Activated CD4-positive, alpha-beta T cell treated with anti-CD3 and anti-CD28 coated beads for 36 hours (primary cell): ENCODE measurements at regions of chr15 and their contacts with region 1.

Region 1: GRCh38 chr15:100602064-100602822 is at the starts of genes ASB7 and LINS1:
- DNase-seq: peak; percentile 100
- ATAC-seq: peak; percentile 85
- H3K4me3 Mint-ChIP-seq: no peak within 1 kb of the TSS
- H3K27ac Mint-ChIP-seq: no peak within 1 kb of the TSS
- H3K4me1 Mint-ChIP-seq: peaks cover 58% of the 10 kb centered on the region
- H3K27me3 Mint-ChIP-seq: no peaks in the 10 kb centered on the region
- total RNA-seq, gene ASB7: 16.6 to 19.5 TPM
- total RNA-seq, gene LINS1: 41.7 to 43.8 TPM

Region 2: GRCh38 chr15:99250494-99251435 is 1351.5 kb before region 1 on chr15:
- CTCF ChIA-PET with region 1: no interaction called
- POLR2A ChIA-PET with region 1: no interaction called
- intact Hi-C with region 1: loop called (anchors 5 kb)
- DNase-seq: peak; percentile 98
- ATAC-seq: peak; percentile 99
- H3K4me3 Mint-ChIP-seq: no peak overlapping the region
- H3K27ac Mint-ChIP-seq: peak overlapping the region; percentile 95
- H3K4me1 Mint-ChIP-seq: peaks cover 22% of the 10 kb centered on the region
- H3K27me3 Mint-ChIP-seq: no peaks in the 10 kb centered on the region

Region 3: DNA sequence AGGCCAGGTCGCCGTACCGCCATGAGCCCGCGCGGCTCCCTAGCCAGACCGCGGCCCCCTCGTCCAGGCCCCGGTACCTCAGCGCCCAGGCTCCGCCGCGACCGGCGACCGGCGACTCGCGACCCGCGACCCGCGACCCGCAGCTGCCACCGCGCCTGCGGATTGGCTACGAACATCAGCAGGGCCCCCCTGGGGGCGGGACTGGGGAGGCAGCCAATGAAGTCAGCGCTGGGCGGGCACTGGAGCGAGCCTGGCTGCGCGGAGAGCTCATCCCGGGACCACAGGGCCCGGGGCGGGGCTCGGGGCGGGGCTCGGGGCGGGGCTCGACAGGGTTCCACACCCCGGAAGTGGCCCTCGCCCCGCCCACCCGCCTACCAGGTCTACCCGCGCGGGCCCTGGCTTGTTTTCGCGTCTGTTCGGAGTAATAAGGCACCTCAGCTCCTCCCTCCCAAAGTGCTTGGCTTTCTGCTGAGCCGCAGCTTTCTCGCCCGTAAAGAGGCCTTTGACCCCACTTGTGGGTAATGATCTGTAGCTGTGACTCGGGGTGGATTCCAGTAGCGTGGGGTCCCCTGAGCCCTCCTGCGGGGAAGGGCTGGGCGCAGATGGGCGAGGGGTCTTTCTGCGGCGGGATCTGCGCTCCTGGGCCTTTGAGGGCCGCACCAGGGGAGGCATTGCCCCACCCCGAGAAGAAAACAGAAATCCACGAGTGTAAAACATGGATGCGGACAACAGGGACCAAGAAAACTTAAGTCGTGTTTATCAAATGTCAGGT is 868.8 kb before region 1 on chr15 and contains the start of gene LYSMD4:
- CTCF ChIA-PET with region 1: no interaction called
- POLR2A ChIA-PET with region 1: no interaction called
- intact Hi-C with region 1: loop called (anchors 2 to 10 kb)
- DNase-seq: peak; percentile 100
- ATAC-seq: peak; percentile 99
- H3K4me3 Mint-ChIP-seq: peak within 1 kb of the TSS; percentile 71
- H3K27ac Mint-ChIP-seq: peak within 1 kb of the TSS; percentile 91
- H3K4me1 Mint-ChIP-seq: peaks cover 23% of the 10 kb centered on the region
- H3K27me3 Mint-ChIP-seq: no peaks in the 10 kb centered on the region
- total RNA-seq, gene LYSMD4: 4.7 to 5.3 TPM

Region 4: GRCh38 chr15:100349696-100350433 is 252.4 kb before region 1 on chr15:
- CTCF ChIA-PET with region 1: interaction called, 14 read pairs
- POLR2A ChIA-PET with region 1: interaction called, 4 read pairs
- intact Hi-C with region 1: loop called (anchors 1 to 2 kb)
- DNase-seq: peak; percentile 93
- ATAC-seq: peak; percentile 95
- H3K4me3 Mint-ChIP-seq: peak overlapping the region; percentile 78
- H3K27ac Mint-ChIP-seq: peak overlapping the region; percentile 77
- H3K4me1 Mint-ChIP-seq: peaks cover 7% of the 10 kb centered on the region
- H3K27me3 Mint-ChIP-seq: peaks cover 7% of the 10 kb centered on the region

Region 5: DNA sequence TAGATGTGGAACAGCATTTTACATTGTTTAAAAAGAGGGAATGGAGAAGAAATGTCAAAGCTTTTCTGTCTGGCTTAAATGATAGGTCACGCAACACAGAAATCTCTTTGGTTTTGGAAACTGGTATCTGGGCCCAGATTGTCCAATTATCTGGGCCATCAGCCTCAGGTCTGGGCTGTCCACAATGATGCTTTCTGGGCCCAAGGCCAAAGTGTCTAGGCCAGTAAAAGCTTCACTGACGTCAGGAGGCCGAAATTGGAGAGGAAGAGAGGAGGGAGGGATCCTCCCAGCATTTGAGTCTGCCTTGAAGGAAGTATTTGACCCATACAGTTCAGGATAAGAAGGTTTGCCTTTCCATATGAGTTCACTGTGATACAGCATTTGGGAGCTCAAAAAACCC is 216.7 kb after region 1 on chr15:
- CTCF ChIA-PET with region 1: no interaction called
- POLR2A ChIA-PET with region 1: no interaction called
- intact Hi-C with region 1: no loop called
- DNase-seq: no peak
- ATAC-seq: no peak
- H3K4me3 Mint-ChIP-seq: no peak overlapping the region
- H3K27ac Mint-ChIP-seq: no peak overlapping the region
- H3K4me1 Mint-ChIP-seq: peaks cover 3% of the 10 kb centered on the region
- H3K27me3 Mint-ChIP-seq: peaks cover 25% of the 10 kb centered on the region

Region 6: GRCh38 chr15:101251830-101252820 is 649.9 kb after region 1 on chr15 and contains the start of gene CHSY1:
- CTCF ChIA-PET with region 1: no interaction called
- POLR2A ChIA-PET with region 1: no interaction called
- intact Hi-C with region 1: loop called in 1 of 2 experiments (anchors 1 kb)
- DNase-seq: peak; percentile 91
- ATAC-seq: peak; percentile 61
- H3K4me3 Mint-ChIP-seq: peak within 1 kb of the TSS; percentile 85
- H3K27ac Mint-ChIP-seq: peak within 1 kb of the TSS; percentile 87
- H3K4me1 Mint-ChIP-seq: peaks cover 58% of the 10 kb centered on the region
- H3K27me3 Mint-ChIP-seq: no peaks in the 10 kb centered on the region
- total RNA-seq, gene CHSY1: 31.5 to 36.1 TPM

Region 7: DNA sequence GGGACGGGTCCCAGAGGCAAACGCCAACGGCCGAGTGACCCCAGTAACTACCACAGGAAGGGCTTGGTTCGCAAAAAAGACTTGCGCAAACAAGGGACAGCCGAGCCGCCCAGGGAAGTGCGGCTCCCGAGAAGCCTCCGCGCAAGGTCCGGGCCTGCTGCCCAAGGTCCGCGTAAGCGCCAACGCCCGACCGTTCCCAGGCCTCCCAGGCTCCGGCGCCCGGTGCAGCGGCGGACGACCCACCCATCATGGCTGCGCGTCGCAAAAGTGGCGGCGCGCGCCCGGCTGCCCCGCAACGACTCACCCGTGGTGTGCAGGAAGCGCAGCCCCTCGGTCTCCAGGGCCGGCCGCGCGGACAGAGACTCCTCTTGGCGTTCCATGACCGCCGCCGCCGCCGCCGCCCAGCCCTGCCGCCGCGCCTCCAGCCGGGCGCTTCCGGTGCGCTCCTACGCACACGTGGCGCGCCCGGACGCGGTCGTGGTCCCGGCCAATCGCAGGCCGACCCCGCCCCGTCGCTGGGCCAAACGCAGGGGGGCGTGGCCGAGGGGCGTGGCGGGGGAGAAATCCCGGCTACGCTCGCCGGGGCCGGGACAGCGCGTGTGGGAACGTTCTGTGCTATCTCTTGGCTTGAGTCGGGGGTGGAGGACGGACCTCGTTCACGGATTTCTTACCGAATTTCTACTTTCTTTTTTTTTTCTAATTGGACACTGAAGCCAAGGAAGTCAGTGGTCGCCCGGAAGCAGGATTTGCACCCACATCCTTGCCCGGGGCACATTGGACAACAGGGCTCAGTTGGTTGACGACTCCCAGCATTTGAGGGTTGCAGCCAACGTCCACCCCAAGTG is 675.0 kb after region 1 on chr15 and contains the start of gene SELENOS:
- CTCF ChIA-PET with region 1: interaction called, 5 read pairs
- POLR2A ChIA-PET with region 1: no interaction called
- intact Hi-C with region 1: loop called in 1 of 2 experiments (anchors 1 kb)
- DNase-seq: peak; percentile 93
- ATAC-seq: peak; percentile 92
- H3K4me3 Mint-ChIP-seq: peak within 1 kb of the TSS; percentile 89
- H3K27ac Mint-ChIP-seq: peak within 1 kb of the TSS; percentile 79
- H3K4me1 Mint-ChIP-seq: peaks cover 24% of the 10 kb centered on the region
- H3K27me3 Mint-ChIP-seq: no peaks in the 10 kb centered on the region
- total RNA-seq, gene SELENOS: 14.5 to 20.8 TPM

Region 8: DNA sequence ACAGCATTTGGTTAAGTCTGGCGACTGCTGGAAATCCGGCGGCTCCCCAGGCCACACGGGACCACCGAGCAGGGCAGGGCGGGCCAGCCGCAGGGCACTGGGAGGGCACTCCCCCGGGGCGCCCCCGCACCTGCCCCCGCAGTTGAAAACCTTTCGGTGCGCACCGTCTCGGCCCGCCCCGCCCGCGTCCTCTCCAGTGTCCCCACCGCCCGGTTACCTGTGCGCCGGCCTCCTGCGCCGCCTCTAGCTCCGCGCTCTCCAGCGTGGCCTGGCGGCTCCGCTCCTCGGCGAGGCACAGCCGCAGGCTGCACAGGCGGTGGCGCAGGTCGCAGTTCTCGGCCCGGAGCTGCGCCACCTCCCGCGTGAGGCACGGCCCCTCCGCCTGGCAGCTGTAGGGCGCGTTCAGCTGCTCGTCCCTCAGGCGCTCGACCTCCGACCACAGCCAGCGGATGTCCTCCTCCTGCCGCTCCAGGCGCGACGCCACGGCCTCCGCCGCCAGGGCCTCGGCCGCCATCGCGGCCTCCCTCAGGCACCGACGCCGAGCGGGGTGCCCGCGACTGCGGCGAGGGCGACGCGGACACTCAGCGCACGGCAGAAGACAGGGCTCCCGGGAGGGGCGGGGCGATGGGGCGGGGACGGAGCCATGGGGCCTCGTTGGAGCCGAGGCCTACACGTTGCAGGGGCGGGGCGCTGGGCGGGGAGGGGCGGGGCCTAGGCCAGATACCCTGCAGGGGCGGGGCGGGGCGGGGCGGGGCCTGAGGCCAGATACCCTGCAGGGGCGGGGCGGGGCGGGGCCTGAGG is 1121.8 kb after region 1 on chr15 and contains the start of gene TARS3:
- CTCF ChIA-PET with region 1: no interaction called
- POLR2A ChIA-PET with region 1: no interaction called
- intact Hi-C with region 1: loop called in 1 of 2 experiments (anchors 1 kb)
- DNase-seq: peak; percentile 98
- ATAC-seq: peak; percentile 93
- H3K4me3 Mint-ChIP-seq: peak within 1 kb of the TSS; percentile 78
- H3K27ac Mint-ChIP-seq: peak within 1 kb of the TSS; percentile 86
- H3K4me1 Mint-ChIP-seq: peaks cover 17% of the 10 kb centered on the region
- H3K27me3 Mint-ChIP-seq: no peaks in the 10 kb centered on the region
- total RNA-seq, gene TARS3: 9.3 to 10.3 TPM